GM13977 (cell line): ENCODE measurements at regions of chr11 and their contacts with region 1.

Region 1: GRCh38 chr11:95705485-95706124 is 84.0 kb downstream of the FAM76B start:
- DNase-seq: peak; percentile 39
- CTCF ChIP-seq: peak; percentile 85

Region 2: GRCh38 chr11:95150946-95151684 is 554.5 kb before region 1 on chr11:
- in situ Hi-C with region 1: loop called (anchors 5 kb)
- DNase-seq: peak; percentile 89
- CTCF ChIP-seq: peak; percentile 78

Region 3: DNA sequence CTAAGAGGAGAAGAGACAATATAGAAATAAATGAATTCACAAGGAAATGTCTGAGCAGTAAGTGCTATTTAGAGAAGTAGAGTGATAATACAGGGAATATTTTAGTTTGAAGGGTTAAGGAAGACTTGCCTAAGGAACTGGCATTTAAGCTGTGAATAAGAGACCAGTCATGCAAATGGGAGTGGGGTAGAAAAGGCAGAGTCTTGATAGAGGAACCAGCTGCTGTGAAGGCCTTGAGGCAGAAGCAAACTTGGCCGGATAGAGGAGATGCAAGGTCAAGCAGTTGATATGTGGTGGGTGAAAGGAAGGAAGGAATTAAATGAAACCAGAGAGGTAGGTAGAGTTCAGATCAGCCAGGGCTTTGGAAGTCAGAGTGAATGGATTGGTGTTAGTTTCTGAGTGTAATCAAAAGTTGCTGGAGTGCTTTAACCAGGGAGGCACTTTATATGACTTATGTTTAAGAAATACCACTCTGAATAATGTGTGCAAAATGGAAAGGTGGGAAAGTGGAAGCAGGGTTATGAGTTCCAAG is 276.2 kb before region 1 on chr11:
- in situ Hi-C with region 1: no loop called
- DNase-seq: no peak
- CTCF ChIP-seq: no peak

Region 4: GRCh38 chr11:96704847-96705246 is 999.2 kb after region 1 on chr11:
- in situ Hi-C with region 1: no loop called
- DNase-seq: no peak
- CTCF ChIP-seq: no peak